ENCODE measurements at regions of chr1 and their contacts with region 1.

Region 1: GRCh38 chr1:65020774-65021173 is 54.4 kb upstream of the JAK1 start:
- DNase-seq: peak; percentile 14
- H3K4me3 ChIP-seq: no peak overlapping the region
- H3K27ac ChIP-seq: no peak overlapping the region
- H3K4me1 ChIP-seq: no peaks in the 10 kb centered on the region
- H3K27me3 ChIP-seq: no peaks in the 10 kb centered on the region
- CTCF ChIP-seq: peak; percentile 13 to 33
- POLR2A ChIP-seq: no peak

Region 2: DNA sequence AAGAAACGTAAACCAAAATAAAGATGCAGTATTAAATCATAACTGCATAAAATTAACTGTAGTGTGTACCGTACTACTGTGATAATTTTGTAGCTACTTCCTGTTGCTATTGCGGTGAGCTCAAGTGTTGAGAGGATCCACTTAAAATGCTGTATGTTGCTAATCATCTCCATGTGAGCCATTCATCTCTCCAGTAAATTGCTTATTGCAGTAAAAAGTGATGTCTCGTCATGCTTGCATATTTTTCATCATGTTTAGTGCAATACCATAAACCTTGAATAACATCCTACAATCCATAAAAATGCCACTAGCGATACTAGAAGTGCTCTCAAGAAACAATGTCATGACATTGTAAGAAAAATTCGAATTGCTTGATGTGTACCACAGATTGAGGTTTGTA is 209.6 kb before region 1 on chr1:
- CTCF ChIA-PET with region 1: no interaction called
- POLR2A ChIA-PET with region 1: no interaction called
- dilution Hi-C with region 1: no loop called
- intact Hi-C with region 1: no loop called
- DNase-seq: no peak
- H3K4me3 ChIP-seq: no peak overlapping the region
- H3K27ac ChIP-seq: no peak overlapping the region
- H3K4me1 ChIP-seq: no peaks in the 10 kb centered on the region
- H3K27me3 ChIP-seq: no peaks in the 10 kb centered on the region
- CTCF ChIP-seq: no peak
- POLR2A ChIP-seq: no peak

Region 3: DNA sequence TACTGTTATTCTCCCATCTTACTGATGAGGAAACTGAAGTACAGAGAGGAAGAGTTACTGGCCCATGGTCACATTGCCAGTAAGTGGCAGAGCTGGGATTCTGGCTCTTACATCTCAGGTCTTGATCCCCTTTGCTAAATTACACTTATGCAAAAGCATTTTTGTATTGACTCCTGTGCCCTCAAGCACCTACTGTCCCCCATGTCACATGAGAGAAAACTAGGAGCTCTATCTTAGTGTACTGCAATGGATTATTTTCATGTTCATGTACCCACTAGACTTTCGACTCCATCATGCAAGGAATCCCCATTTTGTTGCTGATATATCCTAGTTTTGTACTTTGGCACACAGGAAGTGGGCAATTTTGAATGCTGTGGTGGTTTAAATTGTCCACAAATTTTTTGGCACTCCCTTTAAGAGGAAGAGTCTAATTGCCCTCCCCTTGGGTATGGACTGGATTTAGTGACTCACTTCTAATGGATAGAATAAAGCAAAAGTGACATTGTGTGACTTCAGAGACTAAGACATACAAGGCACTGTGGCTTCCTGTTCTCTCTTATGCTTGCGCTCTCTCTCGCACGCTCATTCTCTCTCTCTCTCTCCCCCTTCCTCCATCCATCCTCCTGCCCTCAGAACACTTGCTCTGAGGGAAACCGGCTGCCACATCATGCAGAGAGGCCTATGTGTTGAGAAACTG is 10.9 kb before region 1 on chr1:
- CTCF ChIA-PET with region 1: interaction called, 20 read pairs
- POLR2A ChIA-PET with region 1: no interaction called
- dilution Hi-C with region 1: no loop called
- intact Hi-C with region 1: no loop called
- DNase-seq: no peak
- H3K4me3 ChIP-seq: no peak overlapping the region
- H3K27ac ChIP-seq: no peak overlapping the region
- H3K4me1 ChIP-seq: peaks cover 2% of the 10 kb centered on the region
- H3K27me3 ChIP-seq: no peaks in the 10 kb centered on the region
- CTCF ChIP-seq: no peak
- POLR2A ChIP-seq: no peak

Measured in endothelial cell of umbilical vein (primary cell).